ENCODE measurements at regions of chr5 and their contacts with region 1.

Region 1: DNA sequence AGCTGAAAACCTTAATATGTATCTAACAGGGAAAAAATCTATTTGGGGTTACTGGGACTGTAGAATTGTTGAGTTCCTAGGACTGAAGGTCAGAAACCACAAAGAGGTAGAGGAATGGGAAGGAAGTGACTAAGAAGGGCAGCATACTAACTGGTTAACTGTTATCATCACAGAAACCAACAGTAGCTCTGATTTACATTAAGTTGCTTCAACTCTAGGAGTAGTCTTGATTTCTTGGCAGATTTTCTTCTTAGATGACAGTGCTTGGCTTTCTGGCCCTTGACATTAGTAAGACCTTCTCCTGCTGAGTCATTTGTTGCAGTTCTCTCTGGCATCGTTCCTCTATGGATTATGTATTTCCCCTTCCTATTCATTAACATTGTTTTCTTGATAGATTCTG is 116.1 kb upstream of the RASA1 start:
- DNase-seq: peak; percentile 97
- ATAC-seq: peak; percentile 90
- H3K4me3 ChIP-seq: no peak overlapping the region
- H3K27ac ChIP-seq: no peak overlapping the region
- H3K4me1 ChIP-seq: peaks cover 4% of the 10 kb centered on the region
- H3K27me3 ChIP-seq: no peaks in the 10 kb centered on the region
- CTCF ChIP-seq: no peak
- POLR2A ChIP-seq: no peak
- RAD21 ChIP-seq: peak; percentile 26; the same call in 1 of the 2 replicates

Region 2: DNA sequence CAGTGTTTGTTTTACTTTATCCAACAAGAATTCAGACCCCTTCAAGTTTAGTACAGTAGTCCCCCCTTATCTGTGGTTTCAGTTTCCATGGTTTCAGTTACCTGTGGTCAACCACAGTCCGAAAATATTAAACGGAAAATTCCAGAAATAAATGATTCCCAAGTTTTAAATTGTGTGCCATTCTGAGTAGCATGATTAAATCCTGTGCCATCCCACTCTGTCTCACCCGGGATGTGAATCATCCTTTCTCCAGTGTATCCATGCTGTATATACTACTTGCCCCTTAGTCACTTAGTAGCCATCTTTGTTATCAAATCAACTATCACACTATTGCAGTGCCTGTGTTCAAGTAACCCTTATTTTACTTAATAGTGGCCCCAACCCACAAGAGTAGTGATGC is 37.7 kb before region 1 on chr5:
- CTCF ChIA-PET with region 1: no interaction called
- POLR2A ChIA-PET with region 1: no interaction called
- dilution Hi-C with region 1: no loop called
- in situ Hi-C with region 1: no loop called
- intact Hi-C with region 1: loop called (anchors 5 kb)
- DNase-seq: peak; percentile 89
- ATAC-seq: peak; percentile 96
- H3K4me3 ChIP-seq: no peak overlapping the region
- H3K27ac ChIP-seq: no peak overlapping the region
- H3K4me1 ChIP-seq: peaks cover 2% of the 10 kb centered on the region; the same call in 1 of the 2 replicates
- H3K27me3 ChIP-seq: no peaks in the 10 kb centered on the region
- CTCF ChIP-seq: no peak
- POLR2A ChIP-seq: no peak
- RAD21 ChIP-seq: no peak; the same call in 1 of the 2 replicates

Region 3: DNA sequence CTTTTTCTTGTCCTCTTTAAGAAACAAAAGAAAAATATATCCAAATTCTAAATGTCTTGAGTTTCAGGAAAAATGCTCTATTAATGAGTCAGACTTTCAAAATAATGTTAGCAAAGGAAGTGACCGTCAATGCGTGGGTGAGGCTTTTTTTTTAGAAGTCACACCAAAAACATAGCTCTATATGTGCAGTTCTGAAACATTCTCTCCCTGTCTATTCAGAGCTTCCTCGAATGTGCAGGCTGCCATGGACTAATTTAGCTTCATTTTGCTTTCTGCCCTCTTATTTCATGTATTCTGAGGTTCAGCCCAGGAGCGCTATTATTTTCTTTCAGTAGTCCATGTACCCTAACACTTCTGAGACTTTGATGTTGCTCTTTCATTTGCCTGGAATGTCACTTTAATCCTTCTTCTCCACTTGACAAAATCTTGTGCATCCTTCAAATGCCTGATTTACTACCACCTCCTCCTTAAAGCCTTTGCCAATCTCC is 43.6 kb after region 1 on chr5:
- CTCF ChIA-PET with region 1: no interaction called
- POLR2A ChIA-PET with region 1: no interaction called
- dilution Hi-C with region 1: no loop called
- in situ Hi-C with region 1: no loop called
- intact Hi-C with region 1: loop called (anchors 5 kb)
- DNase-seq: peak; percentile 85
- ATAC-seq: peak; percentile 86
- H3K4me3 ChIP-seq: no peak overlapping the region
- H3K27ac ChIP-seq: peak overlapping the region; percentile 8; the same call in 1 of the 2 replicates
- H3K4me1 ChIP-seq: peaks cover 16% of the 10 kb centered on the region
- H3K27me3 ChIP-seq: no peaks in the 10 kb centered on the region
- CTCF ChIP-seq: no peak
- POLR2A ChIP-seq: no peak
- RAD21 ChIP-seq: no peak

Region 4: DNA sequence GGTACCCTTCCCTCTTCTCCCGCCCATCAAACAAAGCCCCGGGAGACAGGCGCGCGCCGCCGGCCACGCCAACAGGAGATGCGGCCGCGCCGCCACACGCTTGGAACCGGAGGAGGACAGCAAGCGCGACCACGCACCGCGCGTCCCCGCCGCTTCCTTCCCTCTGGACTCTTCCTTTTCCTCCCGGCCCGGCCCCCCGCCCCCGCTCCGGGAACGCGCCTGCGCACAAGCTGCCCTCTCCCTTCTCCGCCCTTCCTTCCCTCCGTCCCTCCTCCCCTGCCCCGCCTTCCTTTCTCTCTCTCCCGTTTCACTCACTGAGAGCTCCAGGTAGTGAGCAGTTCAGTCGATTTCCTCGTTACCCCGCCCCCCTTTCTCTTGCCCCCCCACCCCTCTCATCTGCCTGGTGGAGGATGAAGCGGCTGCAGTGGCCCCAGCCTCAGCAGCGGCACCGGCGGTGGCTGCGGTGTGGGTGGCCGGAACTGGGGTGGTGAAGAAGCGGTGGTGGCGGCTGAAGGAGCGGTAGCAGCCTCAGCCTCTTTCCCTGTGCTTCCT is 116.1 kb after region 1 on chr5 and contains the start of gene RASA1:
- CTCF ChIA-PET with region 1: no interaction called
- POLR2A ChIA-PET with region 1: no interaction called
- dilution Hi-C with region 1: no loop called
- in situ Hi-C with region 1: no loop called
- intact Hi-C with region 1: loop called (anchors 5 kb)
- DNase-seq: peak; percentile 87
- ATAC-seq: peak; percentile 90
- H3K4me3 ChIP-seq: peak within 1 kb of the TSS; percentile 90
- H3K27ac ChIP-seq: peak within 1 kb of the TSS; percentile 98
- H3K4me1 ChIP-seq: no peaks in the 10 kb centered on the region; the same call in 1 of the 2 replicates
- H3K27me3 ChIP-seq: no peaks in the 10 kb centered on the region
- CTCF ChIP-seq: no peak
- POLR2A ChIP-seq: peak; percentile 80
- RAD21 ChIP-seq: no peak
- total RNA-seq, gene RASA1: 45.7 and 55.8 TPM in 2 replicates

Measured in IMR-90 (cell line).